CD14-positive monocyte (primary cell): ENCODE measurements at regions of chr1 and their contacts with region 1.

Region 1: GRCh38 chr1:54488779-54489626 is 59.0 kb upstream of the ACOT11 start:
- DNase-seq: peak; percentile 55 to 68 (median 66)
- H3K4me3 ChIP-seq: peak overlapping the region; percentile 67 to 88 (median 77)
- H3K4me3 Mint-ChIP-seq: peak overlapping the region; percentile 87 to 90
- H3K27ac ChIP-seq: peak overlapping the region; percentile 57 to 85
- H3K27ac Mint-ChIP-seq: peak overlapping the region; percentile 86 to 96 (median 90)
- H3K4me1 ChIP-seq: peaks cover 45 to 51% of the 10 kb centered on the region in 2 donors
- H3K4me1 Mint-ChIP-seq: peaks cover 40% of the 10 kb centered on the region
- H3K27me3 ChIP-seq: peaks cover 6 to 13% of the 10 kb centered on the region in 2 donors
- H3K27me3 Mint-ChIP-seq: peaks cover 26 to 33% (median 29%) of the 10 kb centered on the region in 3 donors
- CTCF ChIP-seq: peak; percentile 98

Region 2: GRCh38 chr1:53889304-53890298 is 599.4 kb before region 1 on chr1 and contains the start of gene YIPF1:
- intact Hi-C with region 1: loop called in 1 of 2 experiments (anchors 10 kb)
- DNase-seq: peak; percentile 68 to 92 (median 81)
- H3K4me3 ChIP-seq: peak within 1 kb of the TSS; percentile 68 to 88 (median 82)
- H3K4me3 Mint-ChIP-seq: peak within 1 kb of the TSS; percentile 94 to 96
- H3K27ac ChIP-seq: peak within 1 kb of the TSS; percentile 72 to 83
- H3K27ac Mint-ChIP-seq: peak within 1 kb of the TSS; percentile 89 to 97 (median 96)
- H3K4me1 ChIP-seq: peaks cover 29 to 43% of the 10 kb centered on the region in 2 donors
- H3K4me1 Mint-ChIP-seq: peaks cover 48% of the 10 kb centered on the region
- H3K27me3 ChIP-seq: no peaks in the 10 kb centered on the region
- H3K27me3 Mint-ChIP-seq: peaks cover 0 to 2% (median 2%) of the 10 kb centered on the region in 3 donors
- CTCF ChIP-seq: no peak
- polyA plus RNA-seq, gene YIPF1: 24.4 to 51.9 (median 42.1) TPM

Region 3: GRCh38 chr1:54070171-54070837 is 418.7 kb before region 1 on chr1:
- intact Hi-C with region 1: loop called in 1 of 2 experiments (anchors 5 kb)
- DNase-seq: peak in 2 of 3 donors; percentile 45 to 66
- H3K4me3 ChIP-seq: no peak overlapping the region
- H3K4me3 Mint-ChIP-seq: no peak overlapping the region
- H3K27ac ChIP-seq: peak overlapping the region in 1 of 2 donors; percentile 0
- H3K27ac Mint-ChIP-seq: no peak overlapping the region
- H3K4me1 ChIP-seq: no peaks in the 10 kb centered on the region
- H3K4me1 Mint-ChIP-seq: no peaks in the 10 kb centered on the region
- H3K27me3 ChIP-seq: no peaks in the 10 kb centered on the region
- H3K27me3 Mint-ChIP-seq: no peaks in the 10 kb centered on the region
- CTCF ChIP-seq: peak; percentile 87

Region 4: DNA sequence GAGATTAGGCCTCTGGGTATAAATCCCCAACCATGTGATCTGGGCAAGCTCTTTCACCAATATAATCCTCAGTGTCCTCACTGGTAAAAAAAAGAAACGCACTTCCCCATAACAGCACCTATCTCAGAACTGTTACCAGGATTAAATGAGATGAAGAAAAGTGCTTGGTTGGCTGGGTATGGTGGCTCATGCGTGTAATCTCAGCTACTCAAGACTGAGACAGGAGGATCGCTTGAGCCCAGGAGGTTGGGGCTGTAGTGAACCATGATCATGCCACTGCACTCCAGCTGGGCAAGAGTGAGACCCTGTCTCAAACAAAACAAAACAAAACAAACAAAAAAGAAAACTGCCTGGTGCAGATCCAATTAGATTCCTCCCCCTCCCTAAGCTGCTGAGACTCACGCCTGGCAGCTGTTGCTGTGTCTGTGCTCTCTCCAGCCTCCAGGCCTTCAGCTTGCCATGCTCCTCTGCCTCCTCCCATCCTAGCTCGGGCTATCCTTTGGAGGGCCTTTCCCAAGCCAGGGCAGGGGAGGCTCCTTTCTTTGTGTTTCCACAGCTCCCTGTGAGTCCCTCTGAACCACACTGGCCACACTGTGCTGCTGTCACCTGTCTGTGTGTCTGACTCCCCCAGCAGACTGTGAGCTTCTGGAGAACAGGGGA is 308.2 kb before region 1 on chr1:
- intact Hi-C with region 1: loop called (anchors 2 to 10 kb)
- DNase-seq: no peak
- H3K4me3 ChIP-seq: no peak overlapping the region
- H3K4me3 Mint-ChIP-seq: no peak overlapping the region
- H3K27ac ChIP-seq: no peak overlapping the region
- H3K27ac Mint-ChIP-seq: peak overlapping the region in 2 of 7 donors; percentile 52 to 57
- H3K4me1 ChIP-seq: no peaks in the 10 kb centered on the region
- H3K4me1 Mint-ChIP-seq: peaks cover 2% of the 10 kb centered on the region
- H3K27me3 ChIP-seq: no peaks in the 10 kb centered on the region
- H3K27me3 Mint-ChIP-seq: peaks cover 0 to 3% (median 0%) of the 10 kb centered on the region in 3 donors
- CTCF ChIP-seq: no peak

Region 5: DNA sequence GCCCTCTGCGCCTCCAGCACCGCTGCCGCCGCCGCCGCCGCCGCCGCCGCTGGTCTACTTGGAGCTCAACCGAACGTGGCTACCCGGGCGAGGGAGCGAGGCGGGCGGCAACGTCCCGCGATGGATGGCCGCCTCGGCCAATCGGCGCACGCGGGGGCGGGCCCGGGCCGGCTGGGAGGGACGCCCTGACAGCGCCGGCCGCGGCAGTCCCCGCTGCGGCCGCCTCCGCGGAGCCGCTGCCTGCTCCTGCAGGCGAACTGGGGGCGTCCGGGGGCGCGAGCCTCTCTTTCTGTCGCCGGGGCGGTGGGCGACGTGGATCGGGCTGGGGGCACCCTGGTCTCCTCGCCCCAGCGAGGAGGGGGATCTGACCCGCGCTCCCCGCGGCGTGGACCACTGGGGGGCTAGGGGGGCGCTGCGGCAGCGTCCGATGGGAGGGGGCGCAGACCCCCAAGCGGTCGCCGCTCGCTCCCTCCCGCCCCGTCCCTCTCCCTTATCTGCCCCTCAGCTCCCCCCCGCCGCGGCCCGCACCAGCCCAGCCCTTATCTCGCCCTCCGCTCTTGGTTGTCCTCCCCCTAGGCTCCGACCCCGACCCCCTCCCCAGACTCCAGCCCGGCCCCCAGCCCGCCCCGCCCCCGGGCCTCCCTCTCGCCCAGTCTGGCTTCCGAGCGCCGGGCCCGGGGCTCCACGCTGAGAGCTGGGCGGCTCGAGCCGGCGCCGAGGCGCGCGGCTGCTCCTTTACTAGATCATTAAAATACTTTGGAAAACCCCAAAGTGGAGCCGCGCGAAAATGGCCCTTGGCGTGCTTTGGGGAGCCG is 82.5 kb before region 1 on chr1 and contains the start of gene SSBP3:
- intact Hi-C with region 1: loop called (anchors 1 to 2 kb)
- DNase-seq: peak; percentile 83 to 88 (median 85)
- H3K4me3 ChIP-seq: peak within 1 kb of the TSS; percentile 61 to 97 (median 96)
- H3K4me3 Mint-ChIP-seq: peak within 1 kb of the TSS; percentile 86 to 92
- H3K27ac ChIP-seq: peak within 1 kb of the TSS; percentile 57 to 92
- H3K27ac Mint-ChIP-seq: peak within 1 kb of the TSS; percentile 87 to 93 (median 90)
- H3K4me1 ChIP-seq: peaks cover 32 to 54% of the 10 kb centered on the region in 2 donors
- H3K4me1 Mint-ChIP-seq: peaks cover 51% of the 10 kb centered on the region
- H3K27me3 ChIP-seq: peaks cover 0 to 8% of the 10 kb centered on the region in 2 donors
- H3K27me3 Mint-ChIP-seq: peaks cover 8 to 13% (median 11%) of the 10 kb centered on the region in 3 donors
- CTCF ChIP-seq: peak; percentile 7
- polyA plus RNA-seq, gene SSBP3: 4.1 to 30.7 (median 4.3) TPM

Region 6: DNA sequence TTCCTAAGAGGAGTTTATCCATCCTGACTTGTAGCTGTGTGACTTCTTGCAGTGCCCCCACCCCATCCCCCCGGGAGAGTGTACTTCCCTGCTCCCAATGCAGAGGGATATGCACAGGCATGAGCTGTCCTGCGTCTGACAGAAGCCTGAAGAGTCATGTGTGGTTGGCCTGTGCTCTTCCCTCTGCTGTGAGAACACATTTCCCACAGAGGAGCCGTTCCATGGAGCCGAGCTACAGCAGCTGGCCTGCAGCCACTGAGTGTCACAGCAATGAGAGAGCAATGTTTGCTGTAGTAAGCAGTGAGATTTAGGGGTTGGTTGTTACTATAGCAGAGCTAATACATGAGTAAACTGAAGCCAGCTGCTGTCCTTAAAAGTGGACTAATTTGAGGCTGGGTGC is 253.3 kb after region 1 on chr1:
- intact Hi-C with region 1: no loop called
- DNase-seq: no peak
- H3K4me3 ChIP-seq: no peak overlapping the region
- H3K4me3 Mint-ChIP-seq: no peak overlapping the region
- H3K27ac ChIP-seq: no peak overlapping the region
- H3K27ac Mint-ChIP-seq: peak overlapping the region in 1 of 7 donors; percentile 76
- H3K4me1 ChIP-seq: no peaks in the 10 kb centered on the region
- H3K4me1 Mint-ChIP-seq: no peaks in the 10 kb centered on the region
- H3K27me3 ChIP-seq: no peaks in the 10 kb centered on the region
- H3K27me3 Mint-ChIP-seq: peaks cover 0 to 2% (median 0%) of the 10 kb centered on the region in 3 donors
- CTCF ChIP-seq: no peak